ENCODE measurements at regions of chr1 and their contacts with region 1.

Region 1: GRCh38 chr1:246420300-246420699 is 86.8 kb downstream of the SMYD3 start:
- DNase-seq: no peak
- H3K4me3 ChIP-seq: no peak overlapping the region
- H3K27ac ChIP-seq: no peak overlapping the region
- H3K4me1 ChIP-seq: no peaks in the 10 kb centered on the region
- H3K27me3 ChIP-seq: no peaks in the 10 kb centered on the region
- CTCF ChIP-seq: no peak
- EP300 ChIP-seq: no peak
- POLR2A ChIP-seq: no peak

Region 2: GRCh38 chr1:246291127-246291526 is 129.2 kb before region 1 on chr1:
- intact Hi-C with region 1: loop called in 1 of 4 experiments (anchors 5 kb)
- DNase-seq: no peak
- H3K4me3 ChIP-seq: no peak overlapping the region
- H3K27ac ChIP-seq: no peak overlapping the region
- H3K4me1 ChIP-seq: no peaks in the 10 kb centered on the region
- H3K27me3 ChIP-seq: no peaks in the 10 kb centered on the region
- CTCF ChIP-seq: no peak
- EP300 ChIP-seq: no peak
- POLR2A ChIP-seq: no peak

Region 3: GRCh38 chr1:246569248-246570238 is 149.2 kb after region 1 on chr1:
- intact Hi-C with region 1: no loop called
- DNase-seq: no peak
- H3K4me3 ChIP-seq: no peak overlapping the region
- H3K27ac ChIP-seq: no peak overlapping the region
- H3K4me1 ChIP-seq: peaks cover 7% of the 10 kb centered on the region
- H3K27me3 ChIP-seq: no peaks in the 10 kb centered on the region
- CTCF ChIP-seq: no peak
- EP300 ChIP-seq: no peak
- POLR2A ChIP-seq: no peak

Measured in ovary (tissue), 10 donors.